ENCODE measurements at regions of chr1 and their contacts with region 1.

Region 1: GRCh38 chr1:46036894-46037839 is 95.3 kb downstream of the PIK3R3 start:
- DNase-seq: peak; percentile 65 to 71
- ATAC-seq: peak; percentile 79 to 83
- H3K4me3 ChIP-seq: no peak overlapping the region
- H3K27ac ChIP-seq: no peak overlapping the region
- H3K4me1 ChIP-seq: no peaks in the 10 kb centered on the region
- CTCF ChIP-seq: peak; percentile 82
- EP300 ChIP-seq: no peak
- POLR2A ChIP-seq: no peak
- RAD21 ChIP-seq: peak; percentile 88 to 89

Region 2: DNA sequence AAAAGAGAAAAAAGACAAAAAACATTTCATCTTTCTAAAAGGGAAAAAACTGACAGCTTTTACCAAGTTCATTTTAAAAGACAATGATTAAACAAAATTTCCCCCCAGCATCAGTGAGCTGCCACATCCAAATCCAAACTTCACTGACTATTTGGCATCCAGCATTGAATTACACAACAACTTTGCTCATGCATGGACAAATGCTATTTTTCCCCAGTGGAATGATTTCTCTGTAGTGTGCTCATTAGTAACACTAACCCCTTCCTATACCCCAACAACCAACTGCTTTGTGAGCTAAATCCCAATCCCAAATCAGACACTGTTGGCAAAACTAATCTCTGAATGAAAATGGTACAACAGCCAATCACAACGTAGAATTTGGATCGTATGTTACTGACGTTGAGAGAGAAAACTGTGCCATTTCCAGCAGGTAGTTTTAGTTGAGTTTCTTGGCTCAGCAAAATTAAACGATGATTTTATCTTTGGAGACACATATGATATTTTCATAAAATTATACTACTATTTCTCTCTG is 57.4 kb after region 1 on chr1:
- CTCF ChIA-PET with region 1: no interaction called
- POLR2A ChIA-PET with region 1: no interaction called
- DNase-seq: no peak
- ATAC-seq: no peak
- H3K4me3 ChIP-seq: no peak overlapping the region
- H3K27ac ChIP-seq: no peak overlapping the region
- H3K4me1 ChIP-seq: peaks cover 6% of the 10 kb centered on the region; the same call in 1 of the 3 replicates
- CTCF ChIP-seq: no peak
- EP300 ChIP-seq: no peak
- POLR2A ChIP-seq: no peak
- RAD21 ChIP-seq: no peak

Region 3: GRCh38 chr1:46179138-46180081 is 142.2 kb after region 1 on chr1:
- CTCF ChIA-PET with region 1: interaction called, 181 read pairs
- POLR2A ChIA-PET with region 1: no interaction called
- DNase-seq: peak; percentile 80 to 88
- ATAC-seq: peak; percentile 82 to 92
- H3K4me3 ChIP-seq: no peak overlapping the region
- H3K27ac ChIP-seq: peak overlapping the region; percentile 62 to 81
- H3K4me1 ChIP-seq: peaks cover 54% of the 10 kb centered on the region
- CTCF ChIP-seq: peak; percentile 76
- EP300 ChIP-seq: no peak
- POLR2A ChIP-seq: no peak
- RAD21 ChIP-seq: peak; percentile 90 to 93

Region 4: DNA sequence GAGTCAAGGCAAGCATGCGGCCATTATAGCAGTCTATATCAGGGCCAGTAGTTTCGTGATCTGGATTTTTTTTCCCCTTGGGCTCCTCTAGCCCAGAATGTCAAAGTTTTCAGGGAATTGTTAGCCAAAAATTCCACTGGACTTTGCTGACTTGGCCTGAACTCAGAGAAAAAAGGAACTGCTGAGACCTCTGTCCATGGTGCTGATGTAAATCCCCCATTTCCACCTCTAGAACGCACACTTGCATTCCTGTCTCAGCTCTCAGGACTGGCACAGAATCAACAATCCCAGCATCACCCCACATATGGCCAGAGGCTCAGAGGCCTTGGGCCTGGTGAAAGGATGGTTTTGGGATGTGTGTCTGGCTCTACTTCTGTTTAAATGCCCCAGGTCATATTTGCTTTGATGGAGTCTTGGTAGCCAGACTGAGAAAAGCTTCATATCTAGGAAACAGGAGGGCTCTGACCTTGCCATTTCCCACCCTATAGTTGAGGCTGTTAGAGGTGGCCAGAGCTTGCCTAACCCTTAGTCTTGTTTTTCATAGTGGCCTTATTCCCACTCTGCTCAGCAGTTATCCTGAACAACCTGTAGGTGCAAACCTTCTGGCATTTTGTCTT is 698.6 kb after region 1 on chr1:
- CTCF ChIA-PET with region 1: no interaction called
- POLR2A ChIA-PET with region 1: no interaction called
- DNase-seq: peak in 1 of 2 experiments; percentile 46
- ATAC-seq: peak; percentile 56 to 71; a peak in 5 of 6 replicates
- H3K4me3 ChIP-seq: no peak overlapping the region
- H3K27ac ChIP-seq: no peak overlapping the region
- H3K4me1 ChIP-seq: no peaks in the 10 kb centered on the region
- CTCF ChIP-seq: no peak; the same call in 2 of the 3 replicates
- EP300 ChIP-seq: no peak
- POLR2A ChIP-seq: no peak
- RAD21 ChIP-seq: no peak; a peak in 1 of 5 replicates

Measured in A549 (cell line).